CD4-positive, alpha-beta T cell (primary cell): ENCODE measurements at regions of chr17 and their contacts with region 1.

Region 1: GRCh38 chr17:42248351-42249179 is 27.6 kb downstream of the STAT5B start:
- DNase-seq: peak; percentile 64 to 94 (median 80)
- ATAC-seq: peak; percentile 86
- H3K4me3 ChIP-seq: peak overlapping the region; percentile 42
- H3K4me3 Mint-ChIP-seq: peak overlapping the region; percentile 85
- H3K27ac ChIP-seq: peak overlapping the region; percentile 85 to 86
- H3K27ac Mint-ChIP-seq: peak overlapping the region; percentile 96
- H3K4me1 ChIP-seq: peaks cover 55% of the 10 kb centered on the region
- H3K4me1 Mint-ChIP-seq: peaks cover 66% of the 10 kb centered on the region
- H3K27me3 ChIP-seq: no peaks in the 10 kb centered on the region
- H3K27me3 Mint-ChIP-seq: no peaks in the 10 kb centered on the region
- CTCF ChIP-seq: no peak

Region 2: DNA sequence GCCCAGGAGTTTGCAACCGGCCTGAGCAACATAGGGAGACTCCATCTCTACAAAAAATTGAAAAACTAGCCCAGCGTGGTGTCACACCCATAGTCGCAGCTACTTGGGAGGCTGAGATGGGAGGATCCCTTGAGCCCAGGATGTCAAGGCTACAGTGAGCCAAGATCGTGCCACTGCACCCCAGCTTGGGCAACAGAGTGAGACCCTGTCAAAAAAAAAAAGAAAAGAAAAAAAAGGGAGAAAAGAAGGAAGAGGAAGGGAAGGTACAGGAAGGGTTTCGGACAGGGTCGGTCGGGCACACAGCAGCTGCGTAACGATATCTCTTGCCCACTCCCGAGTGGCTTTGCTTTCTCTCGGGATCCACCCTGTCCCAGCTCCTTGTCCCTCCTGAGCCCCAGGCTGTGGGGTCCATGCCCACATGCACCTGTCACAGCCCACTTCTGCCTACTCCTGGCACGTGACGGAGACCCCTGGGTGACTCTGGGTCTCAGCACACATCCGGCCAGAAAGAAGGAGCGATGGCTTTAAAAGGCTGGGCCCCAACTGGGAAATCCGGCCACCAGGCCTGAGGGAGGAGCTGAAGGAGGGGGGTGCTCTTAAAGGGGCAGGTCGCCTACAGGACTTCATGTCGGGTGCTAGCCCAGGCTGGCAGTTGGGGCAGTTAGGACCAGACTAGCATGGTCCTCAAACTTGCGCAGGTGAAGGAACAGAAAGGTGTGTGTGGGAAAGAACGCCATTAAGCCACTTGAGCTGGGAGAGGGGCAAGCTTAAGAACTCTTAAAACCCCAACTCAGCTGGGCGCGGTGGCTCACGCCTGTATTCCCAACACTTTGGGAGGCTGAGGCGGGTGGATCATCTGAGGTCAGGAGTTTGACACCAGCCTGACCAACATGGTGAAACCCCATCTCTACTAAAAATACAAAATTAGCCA is 54.3 kb before region 1 on chr17 and contains the start of gene GHDC:
- CTCF ChIA-PET with region 1: interaction called, 4 read pairs
- POLR2A ChIA-PET with region 1: interaction called, 23 read pairs
- intact Hi-C with region 1: no loop called
- DNase-seq: peak; percentile 55 to 88 (median 73)
- ATAC-seq: peak; percentile 97
- H3K4me3 ChIP-seq: peak within 1 kb of the TSS; percentile 75
- H3K4me3 Mint-ChIP-seq: peak within 1 kb of the TSS; percentile 95
- H3K27ac ChIP-seq: peak within 1 kb of the TSS; percentile 34 to 39
- H3K27ac Mint-ChIP-seq: peak within 1 kb of the TSS; percentile 76
- H3K4me1 ChIP-seq: peaks cover 26% of the 10 kb centered on the region
- H3K4me1 Mint-ChIP-seq: peaks cover 18% of the 10 kb centered on the region
- H3K27me3 ChIP-seq: no peaks in the 10 kb centered on the region
- H3K27me3 Mint-ChIP-seq: no peaks in the 10 kb centered on the region
- CTCF ChIP-seq: no peak
- total RNA-seq, gene GHDC: 6.8 to 8.3 TPM

Region 3: GRCh38 chr17:42266918-42267778 is 18.6 kb after region 1 on chr17:
- CTCF ChIA-PET with region 1: interaction called, 51 read pairs
- POLR2A ChIA-PET with region 1: interaction called, 301 read pairs
- intact Hi-C with region 1: no loop called
- DNase-seq: peak in 7 of 14 experiments; percentile 29 to 91 (median 65)
- ATAC-seq: peak; percentile 86
- H3K4me3 ChIP-seq: no peak overlapping the region
- H3K4me3 Mint-ChIP-seq: peak overlapping the region; percentile 71
- H3K27ac ChIP-seq: peak overlapping the region; percentile 36 to 62
- H3K27ac Mint-ChIP-seq: peak overlapping the region; percentile 91
- H3K4me1 ChIP-seq: peaks cover 47% of the 10 kb centered on the region
- H3K4me1 Mint-ChIP-seq: peaks cover 62% of the 10 kb centered on the region
- H3K27me3 ChIP-seq: no peaks in the 10 kb centered on the region
- H3K27me3 Mint-ChIP-seq: no peaks in the 10 kb centered on the region
- CTCF ChIP-seq: no peak

Region 4: GRCh38 chr17:42287926-42288802 is 39.6 kb after region 1 on chr17 and contains the start of gene STAT5A:
- CTCF ChIA-PET with region 1: interaction called, 13 read pairs
- POLR2A ChIA-PET with region 1: interaction called, 137 read pairs
- intact Hi-C with region 1: loop called in 1 of 2 experiments (anchors 1 kb)
- DNase-seq: peak; percentile 60 to 92 (median 76)
- ATAC-seq: peak; percentile 81
- H3K4me3 ChIP-seq: peak within 1 kb of the TSS; percentile 86
- H3K4me3 Mint-ChIP-seq: peak within 1 kb of the TSS; percentile 92
- H3K27ac ChIP-seq: peak within 1 kb of the TSS; percentile 87 to 89
- H3K27ac Mint-ChIP-seq: peak within 1 kb of the TSS; percentile 95
- H3K4me1 ChIP-seq: peaks cover 61% of the 10 kb centered on the region
- H3K4me1 Mint-ChIP-seq: peaks cover 51% of the 10 kb centered on the region
- H3K27me3 ChIP-seq: no peaks in the 10 kb centered on the region
- H3K27me3 Mint-ChIP-seq: no peaks in the 10 kb centered on the region
- CTCF ChIP-seq: no peak
- total RNA-seq, gene STAT5A: 141 to 150 TPM

Region 5: GRCh38 chr17:42405963-42406495 is 157.5 kb after region 1 on chr17:
- CTCF ChIA-PET with region 1: interaction called, 10 read pairs
- POLR2A ChIA-PET with region 1: interaction called, 3 read pairs
- intact Hi-C with region 1: no loop called
- DNase-seq: peak; percentile 70 to 90 (median 82)
- ATAC-seq: peak; percentile 88
- H3K4me3 ChIP-seq: no peak overlapping the region
- H3K4me3 Mint-ChIP-seq: no peak overlapping the region
- H3K27ac ChIP-seq: no peak overlapping the region
- H3K27ac Mint-ChIP-seq: no peak overlapping the region
- H3K4me1 ChIP-seq: peaks cover 13% of the 10 kb centered on the region
- H3K4me1 Mint-ChIP-seq: peaks cover 11% of the 10 kb centered on the region
- H3K27me3 ChIP-seq: no peaks in the 10 kb centered on the region
- H3K27me3 Mint-ChIP-seq: no peaks in the 10 kb centered on the region
- CTCF ChIP-seq: peak; percentile 76